IMR-90 (cell line): ENCODE measurements at regions of chr12 and their contacts with region 1.

Region 1: DNA sequence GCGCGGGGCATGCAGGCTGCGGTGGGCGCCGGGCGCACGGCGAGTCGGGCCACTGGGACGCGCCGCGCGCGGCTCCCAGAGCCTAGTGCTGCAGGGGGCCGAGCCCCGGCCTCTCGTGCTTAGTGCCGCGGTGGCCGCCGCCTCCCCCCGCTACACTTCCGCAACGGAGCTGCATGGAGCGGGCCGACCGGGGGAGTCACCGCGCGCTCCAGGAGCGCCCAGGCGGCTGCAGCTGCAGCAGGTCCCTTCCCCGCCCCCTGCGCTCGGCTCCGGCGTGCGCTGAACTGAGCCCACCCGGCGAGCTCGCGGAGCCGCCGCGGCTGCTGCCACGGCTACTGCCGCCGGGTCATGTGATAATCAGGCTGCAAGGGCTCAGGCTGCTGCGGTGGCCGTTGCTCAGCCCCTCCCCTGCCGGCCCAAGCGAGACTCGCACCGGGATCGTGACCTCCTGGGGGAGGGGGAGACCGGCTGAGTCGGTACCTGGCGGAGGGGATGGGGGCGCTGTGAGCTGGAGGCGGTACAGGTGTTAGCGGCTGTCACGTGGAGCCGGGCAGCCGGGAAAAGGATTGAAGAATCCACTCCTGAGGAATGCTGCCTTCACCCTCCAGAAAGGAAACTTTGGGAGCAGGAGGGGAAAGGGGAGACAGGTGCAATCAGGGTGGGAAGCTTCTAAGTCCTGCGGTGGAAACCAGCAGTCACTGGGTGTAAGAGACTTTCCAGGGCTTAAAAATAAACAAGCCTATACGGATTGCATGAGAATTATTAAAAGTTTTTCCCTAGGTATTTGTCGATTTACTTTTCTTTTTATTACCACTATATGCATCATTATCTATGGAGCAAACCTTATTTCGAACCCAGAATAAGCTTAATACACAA is at the start of gene PPM1H:
- DNase-seq: peak; percentile 11
- ATAC-seq: peak; percentile 86
- H3K4me3 ChIP-seq: peak within 1 kb of the TSS; percentile 60
- H3K27ac ChIP-seq: no peak within 1 kb of the TSS
- H3K4me1 ChIP-seq: peaks cover 2% of the 10 kb centered on the region; the same call in 1 of the 2 replicates
- H3K27me3 ChIP-seq: peaks cover 36% of the 10 kb centered on the region
- CTCF ChIP-seq: no peak; the same call in 1 of the 2 replicates
- POLR2A ChIP-seq: no peak
- RAD21 ChIP-seq: no peak
- total RNA-seq, gene PPM1H: 0.18 and 0.28 TPM in 2 replicates

Region 2: DNA sequence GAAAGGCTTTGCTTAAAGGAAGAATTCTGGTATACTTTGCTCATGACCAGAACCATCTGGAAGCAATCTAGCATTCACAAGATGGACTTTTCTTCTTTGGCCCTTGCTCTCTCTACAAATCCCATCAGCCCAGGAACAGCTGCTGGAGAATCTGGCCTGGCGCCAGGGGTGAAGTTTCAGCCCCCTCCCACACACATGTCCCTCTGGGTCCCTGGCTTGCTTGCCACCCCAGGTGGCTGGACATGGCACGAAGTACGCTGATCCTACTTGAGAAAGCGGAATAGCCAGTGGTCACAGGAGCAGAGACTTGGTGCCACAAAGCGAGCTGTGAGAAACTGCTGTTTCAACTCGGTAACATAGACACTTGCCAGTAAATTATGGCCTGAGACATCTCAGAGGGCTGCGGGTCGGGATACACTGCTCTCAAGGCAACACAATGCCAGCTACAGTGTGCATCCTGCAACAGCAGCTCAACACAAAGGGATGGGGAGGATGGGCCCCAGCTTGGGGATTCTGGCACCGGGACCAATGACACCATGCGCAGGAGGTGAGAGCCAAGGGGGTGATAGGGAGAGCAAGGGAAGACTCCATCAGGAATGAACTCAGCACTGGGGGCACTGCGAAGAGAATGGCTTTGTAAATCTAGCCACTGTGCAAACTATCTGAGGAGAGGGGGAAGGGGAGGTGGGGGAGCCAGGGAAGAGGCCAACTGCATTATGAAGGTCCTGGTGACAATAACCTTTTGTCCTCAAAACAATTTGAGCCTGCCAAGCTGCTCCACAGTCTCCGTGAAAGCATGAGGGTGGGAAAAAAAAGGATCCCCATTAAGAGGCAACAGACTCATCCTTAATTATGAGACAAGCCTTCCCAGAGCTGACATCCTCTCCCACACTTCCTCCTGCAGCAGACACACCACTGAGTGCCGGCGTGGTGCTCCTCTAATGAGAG is 220.0 kb before region 1 on chr12:
- CTCF ChIA-PET with region 1: no interaction called
- POLR2A ChIA-PET with region 1: no interaction called
- dilution Hi-C with region 1: no loop called
- in situ Hi-C with region 1: no loop called
- intact Hi-C with region 1: no loop called
- DNase-seq: no peak
- ATAC-seq: no peak
- H3K4me3 ChIP-seq: no peak overlapping the region
- H3K27ac ChIP-seq: no peak overlapping the region
- H3K4me1 ChIP-seq: peaks cover 3% of the 10 kb centered on the region
- H3K27me3 ChIP-seq: no peaks in the 10 kb centered on the region
- CTCF ChIP-seq: no peak
- POLR2A ChIP-seq: no peak
- RAD21 ChIP-seq: no peak

Region 3: GRCh38 chr12:62813031-62813829 is 121.8 kb before region 1 on chr12:
- CTCF ChIA-PET with region 1: interaction called, 3 read pairs
- POLR2A ChIA-PET with region 1: no interaction called
- dilution Hi-C with region 1: no loop called
- in situ Hi-C with region 1: no loop called
- intact Hi-C with region 1: loop called (anchors 1 kb)
- DNase-seq: peak; percentile 68
- ATAC-seq: peak; percentile 89
- H3K4me3 ChIP-seq: no peak overlapping the region
- H3K27ac ChIP-seq: no peak overlapping the region
- H3K4me1 ChIP-seq: no peaks in the 10 kb centered on the region
- H3K27me3 ChIP-seq: peaks cover 20% of the 10 kb centered on the region
- CTCF ChIP-seq: peak; percentile 65
- POLR2A ChIP-seq: no peak
- RAD21 ChIP-seq: peak; percentile 70